CD14-positive monocyte (primary cell): ENCODE measurements at regions of chr5 and their contacts with region 1.

Region 1: GRCh38 chr5:137660349-137660817 is 75.5 kb downstream of the KLHL3 start:
- DNase-seq: peak; percentile 38 to 52 (median 51)
- H3K4me3 ChIP-seq: no peak overlapping the region
- H3K4me3 Mint-ChIP-seq: no peak overlapping the region
- H3K27ac ChIP-seq: no peak overlapping the region
- H3K27ac Mint-ChIP-seq: no peak overlapping the region
- H3K4me1 ChIP-seq: no peaks in the 10 kb centered on the region
- H3K4me1 Mint-ChIP-seq: no peaks in the 10 kb centered on the region
- H3K27me3 ChIP-seq: no peaks in the 10 kb centered on the region
- H3K27me3 Mint-ChIP-seq: peaks cover 0 to 5% (median 1%) of the 10 kb centered on the region in 3 donors
- CTCF ChIP-seq: peak; percentile 83

Region 2: DNA sequence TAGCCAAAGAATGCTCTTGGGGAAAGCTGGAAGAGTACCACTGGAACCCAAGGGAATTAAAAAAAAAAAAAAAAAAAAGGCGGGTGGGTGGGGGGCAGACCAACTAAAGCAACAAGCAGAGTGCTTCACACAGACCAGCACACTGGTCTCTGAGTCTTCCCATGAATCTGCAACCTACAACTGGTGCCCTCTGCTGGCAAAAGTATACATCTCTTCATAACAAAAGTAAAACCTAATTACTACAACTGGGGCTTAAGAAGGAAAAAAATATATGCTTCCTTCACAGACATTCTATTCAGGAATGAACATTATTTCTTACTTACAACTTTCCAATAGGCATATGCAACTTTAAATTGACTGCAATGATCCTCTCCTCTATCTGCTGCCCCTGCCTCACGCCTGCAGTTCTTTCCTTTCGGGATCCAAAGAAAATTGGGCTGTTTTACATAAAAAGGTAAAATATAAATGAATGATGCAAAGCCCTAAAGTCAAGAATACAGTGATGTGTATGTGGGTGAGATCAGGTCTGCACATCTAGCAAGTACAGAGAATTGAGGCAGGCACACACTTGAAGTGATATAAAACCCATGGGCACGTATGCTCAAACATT is 82.8 kb after region 1 on chr5:
- intact Hi-C with region 1: loop called in 1 of 2 experiments (anchors 10 kb)
- DNase-seq: peak; percentile 46 to 66 (median 55)
- H3K4me3 ChIP-seq: no peak overlapping the region
- H3K4me3 Mint-ChIP-seq: no peak overlapping the region
- H3K27ac ChIP-seq: no peak overlapping the region
- H3K27ac Mint-ChIP-seq: no peak overlapping the region
- H3K4me1 ChIP-seq: no peaks in the 10 kb centered on the region
- H3K4me1 Mint-ChIP-seq: peaks cover 3% of the 10 kb centered on the region
- H3K27me3 ChIP-seq: no peaks in the 10 kb centered on the region
- H3K27me3 Mint-ChIP-seq: peaks cover 0 to 7% (median 0%) of the 10 kb centered on the region in 3 donors
- CTCF ChIP-seq: peak; percentile 70

Region 3: DNA sequence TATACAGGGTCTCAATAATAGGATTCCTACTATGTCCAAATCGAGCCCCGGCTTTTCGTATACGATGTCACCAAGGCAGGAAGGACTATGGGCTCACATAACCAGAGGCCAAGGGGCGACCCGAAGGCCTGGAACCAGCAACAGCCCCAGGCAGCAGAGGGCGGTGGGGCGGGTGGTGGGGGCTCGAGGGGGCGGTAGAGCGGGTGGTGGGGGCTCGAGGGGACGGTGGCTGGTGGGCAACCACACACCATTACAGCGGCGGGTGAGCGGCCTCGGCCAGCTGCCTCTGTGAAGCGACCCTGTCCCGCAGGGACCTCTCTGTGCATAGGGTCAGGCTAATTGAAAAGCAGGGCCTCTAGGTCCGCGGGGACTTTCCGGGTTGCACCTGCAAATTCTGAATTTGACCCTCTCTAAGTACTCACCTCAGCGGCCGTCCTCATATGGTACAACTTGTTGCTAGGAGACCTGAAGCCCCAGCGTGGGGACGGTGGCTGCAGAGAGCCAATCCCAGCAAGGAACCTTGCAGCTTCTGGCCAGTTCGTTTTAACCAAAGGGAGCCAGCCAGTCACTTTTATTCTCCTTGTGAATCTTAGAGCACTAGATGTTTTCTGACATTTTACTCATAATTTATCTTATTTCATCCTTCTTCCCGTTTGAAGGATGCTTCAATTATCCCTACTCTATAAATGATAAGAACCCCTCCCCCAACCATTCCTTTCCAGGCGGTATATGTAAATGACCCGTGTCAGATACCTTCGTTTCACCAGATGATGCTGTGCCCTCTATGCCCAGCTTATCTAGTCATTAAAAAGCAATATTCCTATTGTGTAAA is 478.8 kb after region 1 on chr5 and contains the start of gene NME5:
- intact Hi-C with region 1: loop called in 1 of 2 experiments (anchors 10 kb)
- DNase-seq: peak in 1 of 3 donors; percentile 7
- H3K4me3 ChIP-seq: no peak within 1 kb of the TSS
- H3K4me3 Mint-ChIP-seq: peak within 1 kb of the TSS; percentile 6 to 79
- H3K27ac ChIP-seq: no peak within 1 kb of the TSS
- H3K27ac Mint-ChIP-seq: no peak within 1 kb of the TSS
- H3K4me1 ChIP-seq: peaks cover 9 to 11% of the 10 kb centered on the region in 2 donors
- H3K4me1 Mint-ChIP-seq: peaks cover 12% of the 10 kb centered on the region
- H3K27me3 ChIP-seq: peaks cover 34 to 47% of the 10 kb centered on the region in 2 donors
- H3K27me3 Mint-ChIP-seq: peaks cover 38 to 56% (median 49%) of the 10 kb centered on the region in 3 donors
- CTCF ChIP-seq: no peak
- polyA plus RNA-seq, gene NME5: not detected